H1 (cell line): ENCODE measurements at regions of chr11 and their contacts with region 1.

Region 1: GRCh38 chr11:77820563-77821348 is at the starts of genes AAMDC and RSF1:
- DNase-seq: peak; percentile 93 to 98
- H3K4me3 ChIP-seq: peak within 1 kb of the TSS; percentile 79 to 96 (median 84)
- H3K27ac ChIP-seq: peak within 1 kb of the TSS; percentile 97
- H3K4me1 ChIP-seq: peaks cover 0 to 3% (median 2%) of the 10 kb centered on the region in 4 experiments; a peak in 5 of 7 replicates
- H3K27me3 ChIP-seq: no peaks in the 10 kb centered on the region
- CTCF ChIP-seq: peak; percentile 61 to 75 (median 73)
- EP300 ChIP-seq: peak in 1 of 2 experiments; percentile 63; a peak in 1 of 3 replicates
- POLR2A ChIP-seq: peak; percentile 41 to 61; a peak in 2 of 3 replicates
- RAD21 ChIP-seq: peak; percentile 51 to 54
- total RNA-seq, gene AAMDC: 19.5 and 20.9 TPM in 2 replicates
- total RNA-seq, gene RSF1: 79.3 and 87.9 TPM in 2 replicates

Region 2: DNA sequence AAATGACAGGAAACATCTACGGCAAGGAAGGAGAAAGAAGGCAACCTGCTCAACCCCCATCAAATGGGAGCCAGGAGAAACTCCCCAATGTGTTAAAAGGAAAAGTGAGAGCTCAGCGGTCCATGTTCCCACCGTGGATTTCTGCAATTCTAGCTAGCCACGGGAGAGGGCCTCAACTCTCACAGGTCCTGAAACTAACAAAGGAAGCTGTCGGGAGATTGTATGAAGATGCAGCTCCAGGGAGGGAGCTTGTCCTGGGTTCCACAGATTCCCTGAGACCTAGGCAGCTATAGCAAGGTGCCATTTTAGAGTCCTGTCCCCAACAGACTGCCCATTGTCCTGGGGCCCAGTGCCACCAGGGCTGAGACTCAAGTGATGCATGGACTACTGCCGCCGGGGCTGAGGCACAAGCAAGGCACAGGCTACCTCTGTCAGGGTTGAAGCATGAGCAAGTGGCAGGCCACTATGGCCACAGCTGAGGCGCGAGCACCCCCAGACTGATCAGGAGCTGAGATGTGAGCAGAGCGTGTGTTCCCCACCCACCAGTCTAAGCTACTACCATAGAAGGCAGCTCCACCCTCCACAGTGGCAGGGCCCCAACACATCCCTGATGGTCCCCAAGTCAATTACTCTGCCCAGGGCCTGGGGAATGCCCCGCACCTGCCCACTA is 31.6 kb before region 1 on chr11:
- CTCF ChIA-PET with region 1: interaction called, 11 read pairs
- POLR2A ChIA-PET with region 1: interaction called, 3 read pairs
- DNase-seq: no peak
- H3K4me3 ChIP-seq: no peak overlapping the region
- H3K27ac ChIP-seq: 0 out of 2 replicates have a peak overlapping the region, but pooled peaks have one; percentile 8
- H3K4me1 ChIP-seq: peaks cover 0 to 8% (median 3%) of the 10 kb centered on the region in 4 experiments; a peak in 5 of 7 replicates
- H3K27me3 ChIP-seq: no peaks in the 10 kb centered on the region
- CTCF ChIP-seq: no peak
- EP300 ChIP-seq: no peak
- POLR2A ChIP-seq: no peak
- RAD21 ChIP-seq: no peak

Region 3: GRCh38 chr11:77800449-77800848 is 20.3 kb before region 1 on chr11:
- CTCF ChIA-PET with region 1: interaction called, 8 read pairs
- POLR2A ChIA-PET with region 1: interaction called, 11 read pairs
- DNase-seq: no peak
- H3K4me3 ChIP-seq: no peak overlapping the region
- H3K27ac ChIP-seq: peak overlapping the region; percentile 63; the same call in 1 of the 2 replicates
- H3K4me1 ChIP-seq: 0 out of 7 replicates have a peak, but pooled peaks cover 0 to 2% (median 0%) of the 10 kb centered on the region in 4 experiments
- H3K27me3 ChIP-seq: no peaks in the 10 kb centered on the region
- CTCF ChIP-seq: no peak
- EP300 ChIP-seq: no peak
- POLR2A ChIP-seq: no peak
- RAD21 ChIP-seq: no peak

Region 4: GRCh38 chr11:77994412-77995362 is 173.9 kb after region 1 on chr11 and contains the start of gene INTS4:
- CTCF ChIA-PET with region 1: no interaction called
- POLR2A ChIA-PET with region 1: interaction called, 12 read pairs
- DNase-seq: peak; percentile 91 to 99
- H3K4me3 ChIP-seq: peak within 1 kb of the TSS; percentile 81 to 92 (median 84)
- H3K27ac ChIP-seq: peak within 1 kb of the TSS; percentile 60; the same call in 1 of the 2 replicates
- H3K4me1 ChIP-seq: peaks cover 0 to 4% (median 1%) of the 10 kb centered on the region in 4 experiments; a peak in 4 of 7 replicates
- H3K27me3 ChIP-seq: no peaks in the 10 kb centered on the region
- CTCF ChIP-seq: no peak
- EP300 ChIP-seq: 0 out of 3 replicates have a peak, but pooled peaks of 1 of the 2 experiments have one; percentile 21
- POLR2A ChIP-seq: peak; percentile 62 to 78
- RAD21 ChIP-seq: no peak; a peak in 1 of 4 replicates
- total RNA-seq, gene INTS4: 31.3 and 33.4 TPM in 2 replicates